ENCODE measurements at regions of chr18 and their contacts with region 1.

Region 1: GRCh38 chr18:63119647-63120046 is 199.9 kb downstream of the BCL2 start:
- DNase-seq: no peak
- ATAC-seq: peak; percentile 59
- H3K4me3 Mint-ChIP-seq: no peak overlapping the region
- H3K27ac Mint-ChIP-seq: peak overlapping the region; percentile 27
- H3K4me1 Mint-ChIP-seq: peaks cover 7% of the 10 kb centered on the region
- H3K27me3 Mint-ChIP-seq: peaks cover 30% of the 10 kb centered on the region

Region 2: GRCh38 chr18:63131106-63131958 is 11.7 kb after region 1 on chr18:
- CTCF ChIA-PET with region 1: interaction called, 11 read pairs
- POLR2A ChIA-PET with region 1: no interaction called
- DNase-seq: peak; percentile 73
- ATAC-seq: peak; percentile 56
- H3K4me3 Mint-ChIP-seq: no peak overlapping the region
- H3K27ac Mint-ChIP-seq: peak overlapping the region; percentile 70
- H3K4me1 Mint-ChIP-seq: peaks cover 52% of the 10 kb centered on the region
- H3K27me3 Mint-ChIP-seq: no peaks in the 10 kb centered on the region

Measured in activated CD8-positive, alpha-beta T cell treated with anti-CD3 and anti-CD28 coated beads, Interleukin-2, amount 10 ng/mL, durations not matched to agents 7 days and 5 days (primary cell).